ENCODE measurements at regions of chr3 and their contacts with region 1.

Region 1: GRCh38 chr3:67113802-67114407 is 115.8 kb downstream of the KBTBD8 start:
- DNase-seq: peak; percentile 56
- CTCF ChIP-seq: peak; percentile 97

Region 2: GRCh38 chr3:66582721-66583423 is 531.0 kb before region 1 on chr3:
- CTCF ChIA-PET with region 1: no interaction called
- POLR2A ChIA-PET with region 1: no interaction called
- DNase-seq: peak; percentile 38
- CTCF ChIP-seq: no peak

Region 3: GRCh38 chr3:67028001-67028784 is 85.7 kb before region 1 on chr3:
- CTCF ChIA-PET with region 1: no interaction called
- POLR2A ChIA-PET with region 1: no interaction called
- DNase-seq: no peak
- CTCF ChIP-seq: no peak

Region 4: DNA sequence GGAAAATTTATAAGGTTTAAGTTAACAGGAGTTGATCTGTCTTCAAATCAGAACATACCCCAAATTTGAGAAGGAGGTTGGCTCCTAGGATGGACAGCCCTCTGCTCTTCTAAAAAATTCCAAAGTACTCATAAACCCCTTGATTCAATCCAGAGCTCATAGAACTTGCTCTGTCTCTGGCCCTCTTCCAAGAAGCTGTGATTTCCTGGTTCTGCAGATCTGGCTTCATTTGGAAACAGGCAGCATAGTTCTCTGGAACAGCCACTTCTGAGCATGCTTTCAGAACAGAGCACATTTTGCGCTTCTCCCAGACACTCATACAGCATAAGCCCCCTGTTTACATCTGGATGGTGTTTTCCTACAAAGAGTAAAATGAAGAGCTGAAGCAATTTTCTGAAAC is 19.1 kb before region 1 on chr3:
- CTCF ChIA-PET with region 1: interaction called, 17 read pairs
- POLR2A ChIA-PET with region 1: no interaction called
- DNase-seq: no peak
- CTCF ChIP-seq: no peak

Region 5: GRCh38 chr3:67145738-67146137 is 31.8 kb after region 1 on chr3:
- CTCF ChIA-PET with region 1: no interaction called
- POLR2A ChIA-PET with region 1: no interaction called
- DNase-seq: no peak
- CTCF ChIP-seq: no peak

Region 6: DNA sequence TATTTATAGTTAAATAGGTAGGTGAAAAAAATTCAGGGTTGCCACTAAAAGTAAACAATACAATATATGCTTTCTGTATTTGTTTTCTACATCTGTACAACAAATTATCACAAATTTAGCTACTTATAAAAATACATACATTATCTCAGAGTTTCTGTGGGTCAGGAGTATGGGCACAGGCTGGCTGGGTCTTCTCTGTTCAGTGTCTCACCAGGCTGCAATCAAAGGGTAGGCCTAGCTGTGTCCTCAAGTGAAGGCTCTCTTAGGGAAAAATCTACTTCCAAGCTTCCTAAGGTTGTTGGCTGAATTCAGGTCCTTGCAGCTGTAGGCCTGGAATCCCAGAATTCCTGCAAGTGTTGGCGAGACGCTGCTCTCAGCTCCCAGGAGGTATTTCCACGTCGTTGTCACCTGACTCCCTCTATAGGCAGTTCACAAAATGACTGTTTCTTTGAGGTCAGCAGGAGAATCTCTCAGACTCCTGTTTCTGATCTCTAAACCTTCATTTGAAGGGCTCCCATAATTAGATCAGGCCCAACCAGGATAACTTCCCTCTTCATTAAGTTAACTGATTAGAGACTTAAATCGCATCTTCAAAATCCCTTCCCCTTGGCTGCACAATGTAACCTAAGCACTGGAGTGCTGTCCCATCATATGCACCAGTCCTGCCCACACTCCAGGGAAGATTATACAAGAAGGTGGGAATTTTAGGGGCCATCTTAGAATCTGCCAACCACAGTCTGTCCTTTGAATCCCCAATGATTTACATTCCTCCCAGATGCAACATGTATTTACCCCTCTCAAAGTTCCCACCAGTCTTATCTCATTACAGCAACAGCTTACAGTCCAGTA is 243.9 kb after region 1 on chr3:
- CTCF ChIA-PET with region 1: interaction called, 17 read pairs
- POLR2A ChIA-PET with region 1: no interaction called
- DNase-seq: peak; percentile 28
- CTCF ChIP-seq: peak; percentile 45

Region 7: DNA sequence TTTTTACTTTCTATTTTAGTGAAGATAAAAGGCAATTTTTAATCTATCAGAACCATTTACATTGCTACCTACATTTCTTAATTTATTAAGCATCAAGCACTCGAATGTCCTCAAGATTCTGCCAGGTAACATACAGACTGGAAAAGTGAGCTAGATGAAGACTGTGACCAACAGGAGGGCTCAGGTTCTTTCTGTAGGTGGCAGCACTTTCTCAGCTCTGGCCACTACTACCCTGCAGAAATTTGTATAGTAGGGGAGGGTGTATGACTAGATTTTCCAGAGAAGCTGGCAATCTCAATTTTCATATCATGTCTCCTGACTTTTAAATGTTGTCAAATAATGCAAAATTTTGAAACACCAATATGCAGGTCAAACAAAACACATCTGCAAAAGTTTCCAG is 705.5 kb after region 1 on chr3:
- CTCF ChIA-PET with region 1: no interaction called
- POLR2A ChIA-PET with region 1: no interaction called
- DNase-seq: no peak
- CTCF ChIP-seq: peak; percentile 17

Region 8: GRCh38 chr3:68876112-68876713 is 1762.3 kb after region 1 on chr3:
- CTCF ChIA-PET with region 1: interaction called, 75 read pairs
- POLR2A ChIA-PET with region 1: no interaction called
- DNase-seq: peak; percentile 18
- CTCF ChIP-seq: peak; percentile 76

Measured in GM10248 (cell line).